Activated naive CD4-positive, alpha-beta T cell treated with anti-CD3 and anti-CD28 coated beads for 36 hours (primary cell): ENCODE measurements at regions of chr9 and their contacts with region 1.

Region 1: DNA sequence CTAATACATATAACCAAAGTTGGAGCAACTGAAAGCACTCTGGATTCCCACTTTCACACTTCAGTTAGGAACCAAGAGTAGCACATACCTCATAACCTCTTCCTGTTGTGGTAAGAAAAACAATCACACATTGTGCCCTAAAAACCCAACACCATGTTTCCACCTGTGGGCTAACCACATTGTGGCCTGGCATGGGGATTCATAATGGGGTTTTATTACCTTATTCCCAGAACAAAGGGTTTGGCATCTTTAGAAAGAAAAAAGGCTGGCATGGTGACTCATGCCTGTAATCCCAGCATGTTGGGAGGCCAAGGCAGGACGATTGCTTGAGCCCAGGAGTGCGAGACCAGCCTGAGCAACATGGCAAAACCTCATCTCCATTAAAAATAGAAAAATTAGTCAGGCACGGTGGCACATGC is 60.6 kb downstream of the HSD17B3 start:
- DNase-seq: peak; percentile 83
- H3K4me3 Mint-ChIP-seq: no peak overlapping the region
- H3K27ac Mint-ChIP-seq: no peak overlapping the region
- H3K4me1 Mint-ChIP-seq: peaks cover 13% of the 10 kb centered on the region
- H3K27me3 Mint-ChIP-seq: peaks cover 23% of the 10 kb centered on the region

Region 2: DNA sequence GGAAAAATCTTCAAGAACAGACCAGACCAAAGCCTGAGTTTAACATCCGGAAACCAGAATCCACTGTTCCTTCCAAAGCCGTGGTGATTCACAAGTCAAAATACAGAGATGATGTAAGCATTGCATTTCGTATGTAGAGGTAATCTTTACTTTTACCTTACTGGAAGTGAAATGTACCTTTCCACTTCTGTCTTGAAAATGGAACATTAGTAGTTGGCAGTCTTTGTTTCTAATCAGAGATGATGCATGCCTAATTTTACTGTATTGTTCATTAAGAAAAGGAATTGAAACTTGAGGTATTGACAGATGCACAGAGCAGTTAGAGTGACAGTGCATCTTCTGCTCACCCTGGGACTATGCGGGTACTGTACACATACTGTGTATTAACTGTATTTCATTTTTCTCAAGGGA is 243.1 kb after region 1 on chr9:
- CTCF ChIA-PET with region 1: no interaction called
- intact Hi-C with region 1: loop called (anchors 1 kb)
- DNase-seq: peak; percentile 34
- H3K4me3 Mint-ChIP-seq: no peak overlapping the region
- H3K27ac Mint-ChIP-seq: peak overlapping the region; percentile 63
- H3K4me1 Mint-ChIP-seq: peaks cover 34% of the 10 kb centered on the region
- H3K27me3 Mint-ChIP-seq: no peaks in the 10 kb centered on the region